Activated T-helper 1 cell treated with anti-CD3 and anti-CD28 coated beads, Interleukin-12 subunit alpha, Interleukin-12 subunit beta, Interleukin-2, Interleukin-4 antibody, amounts not matched to agents 30 ng/mL and 10 ng/mL and 1 ng/mL, durations not matched to agents 14 hours and 24 hours and 36 hours (primary cell): ENCODE measurements at regions of chr10 and their contacts with region 1.

Region 1: DNA sequence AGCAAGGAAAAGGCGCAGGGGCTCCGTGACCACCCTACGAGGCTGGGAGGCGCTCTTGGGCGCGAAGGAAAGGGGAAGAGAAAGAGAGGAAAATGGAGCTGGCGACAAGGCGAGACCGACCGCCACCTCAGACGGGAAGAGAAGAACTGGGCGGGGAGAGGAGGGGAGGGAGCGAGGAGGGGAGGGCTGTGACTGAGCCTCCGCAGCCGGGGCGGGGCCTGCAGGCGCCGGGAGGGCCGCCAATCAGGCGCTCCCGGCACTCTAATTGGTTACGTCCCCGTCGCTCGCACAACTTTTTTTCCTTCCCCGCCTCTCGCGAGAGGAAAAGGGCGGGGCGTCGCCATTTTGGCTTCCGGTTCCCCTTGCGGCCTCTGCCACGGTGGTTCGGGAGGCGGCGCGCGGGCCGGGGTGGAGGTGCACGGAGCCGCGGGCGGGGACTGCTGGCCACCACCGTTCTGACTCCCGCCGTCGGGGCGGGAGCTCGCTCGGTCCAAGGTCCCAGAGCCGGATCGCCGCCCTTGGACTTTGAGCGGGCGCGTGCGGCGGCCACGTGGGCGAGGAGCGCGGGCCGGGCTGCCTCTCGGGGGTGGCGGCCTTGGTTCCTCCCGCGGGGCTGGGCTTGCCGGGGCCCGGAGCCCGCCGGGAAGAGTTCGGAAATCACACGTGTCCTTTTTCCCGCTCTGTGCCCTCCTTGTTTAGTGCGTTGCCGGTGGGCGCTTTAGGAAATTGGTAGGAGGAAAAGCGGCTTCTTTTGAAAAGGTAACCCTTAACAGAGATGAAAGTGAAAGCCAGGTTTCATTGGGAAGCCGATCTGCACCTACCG is at the start of gene GDI2:
- DNase-seq: peak; percentile 97
- H3K4me3 Mint-ChIP-seq: peak within 1 kb of the TSS; percentile 95
- H3K27ac Mint-ChIP-seq: peak within 1 kb of the TSS; percentile 91
- H3K4me1 Mint-ChIP-seq: peaks cover 69% of the 10 kb centered on the region
- H3K27me3 Mint-ChIP-seq: no peaks in the 10 kb centered on the region
- total RNA-seq, gene GDI2: 288 and 290 TPM in 2 replicates

Region 2: DNA sequence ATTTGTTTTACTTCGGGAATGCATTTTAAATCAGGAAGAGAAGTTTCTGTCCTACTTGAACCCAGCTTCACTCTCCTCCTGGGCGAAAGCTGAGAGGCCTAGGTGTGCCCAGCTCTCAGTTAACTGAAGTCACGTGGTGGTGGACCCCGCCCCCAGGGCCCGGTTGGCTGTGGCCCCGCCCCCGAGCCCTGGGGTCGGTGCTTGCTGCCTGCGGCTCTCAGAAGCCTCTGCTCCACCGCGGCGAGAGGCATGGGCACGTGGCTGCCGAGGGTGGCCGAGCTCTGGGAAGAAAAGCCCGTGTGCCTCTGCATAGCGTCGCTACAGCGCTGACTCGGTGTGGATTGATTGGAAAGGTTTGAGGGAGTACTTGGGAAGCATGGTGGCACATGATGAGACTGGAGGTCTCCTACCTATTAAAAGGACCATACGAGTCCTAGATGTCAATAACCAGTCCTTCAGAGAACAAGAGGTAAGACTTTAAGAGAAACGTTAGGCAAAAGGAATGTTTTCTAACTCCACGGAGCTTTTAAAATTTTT is 367.0 kb before region 1 on chr10:
- intact Hi-C with region 1: loop called (anchors 10 kb)
- DNase-seq: peak; percentile 75
- H3K4me3 Mint-ChIP-seq: peak overlapping the region; percentile 89
- H3K27ac Mint-ChIP-seq: peak overlapping the region; percentile 79
- H3K4me1 Mint-ChIP-seq: peaks cover 62% of the 10 kb centered on the region
- H3K27me3 Mint-ChIP-seq: no peaks in the 10 kb centered on the region

Region 3: DNA sequence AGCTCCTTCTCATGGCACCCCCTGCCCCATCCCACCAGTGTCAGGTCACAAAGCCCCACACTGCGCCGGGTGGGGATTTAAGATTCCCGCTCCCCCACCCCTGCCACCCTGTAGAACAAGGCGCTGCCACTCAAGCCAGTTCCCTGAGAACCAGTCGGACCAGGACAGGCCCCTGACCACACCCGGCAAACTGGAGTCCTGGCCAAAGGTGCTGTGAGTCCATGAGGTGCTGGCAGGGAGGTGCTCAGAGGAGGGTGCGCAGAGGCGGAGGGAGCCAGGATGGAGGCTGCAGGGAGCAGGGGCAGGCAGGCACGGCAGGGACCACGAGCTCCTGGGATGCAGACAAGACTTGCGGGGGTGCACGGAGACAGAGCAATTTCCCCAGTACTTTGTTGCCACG is 19.4 kb after region 1 on chr10:
- intact Hi-C with region 1: no loop called
- DNase-seq: no peak
- H3K4me3 Mint-ChIP-seq: no peak overlapping the region
- H3K27ac Mint-ChIP-seq: no peak overlapping the region
- H3K4me1 Mint-ChIP-seq: no peaks in the 10 kb centered on the region
- H3K27me3 Mint-ChIP-seq: peaks cover 2% of the 10 kb centered on the region

Region 4: DNA sequence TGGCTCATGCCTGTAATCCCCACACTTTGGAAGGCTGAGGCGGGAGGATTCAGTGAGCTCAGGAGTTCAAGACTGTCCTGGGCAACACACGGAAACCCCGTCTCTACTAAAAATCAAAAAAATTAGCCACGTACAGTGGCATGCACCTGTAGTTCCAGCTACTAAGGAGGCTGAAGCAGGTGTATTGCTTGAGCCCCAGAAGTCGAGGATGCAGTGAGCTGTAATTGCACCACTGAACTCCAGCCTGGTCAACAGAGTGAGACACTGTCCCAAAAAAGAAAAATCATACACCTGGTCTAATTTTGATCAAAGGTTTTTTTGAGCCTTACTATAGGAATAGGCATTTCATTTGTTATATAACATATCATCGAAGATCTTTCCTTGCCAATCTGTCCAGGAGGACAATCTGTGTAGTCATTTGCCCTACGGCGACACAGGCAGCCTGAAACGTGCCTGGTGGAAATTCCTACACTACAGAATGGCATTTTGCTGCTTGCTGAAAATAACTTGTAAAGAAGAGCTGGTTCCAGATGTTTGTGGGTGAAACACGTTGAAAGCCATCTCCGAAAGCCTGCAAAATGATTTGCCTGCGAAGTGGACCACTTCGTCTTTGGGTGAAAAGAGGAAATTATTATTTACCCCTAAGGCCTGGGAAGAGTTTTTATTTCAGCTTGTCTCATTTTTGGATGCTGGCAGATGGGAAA is 31.0 kb after region 1 on chr10:
- intact Hi-C with region 1: loop called (anchors 2 kb)
- DNase-seq: no peak
- H3K4me3 Mint-ChIP-seq: no peak overlapping the region
- H3K27ac Mint-ChIP-seq: no peak overlapping the region
- H3K4me1 Mint-ChIP-seq: peaks cover 19% of the 10 kb centered on the region
- H3K27me3 Mint-ChIP-seq: peaks cover 1% of the 10 kb centered on the region

Region 5: GRCh38 chr10:5862360-5862961 is 49.0 kb after region 1 on chr10:
- intact Hi-C with region 1: no loop called
- DNase-seq: no peak
- H3K4me3 Mint-ChIP-seq: no peak overlapping the region
- H3K27ac Mint-ChIP-seq: no peak overlapping the region
- H3K4me1 Mint-ChIP-seq: peaks cover 10% of the 10 kb centered on the region
- H3K27me3 Mint-ChIP-seq: no peaks in the 10 kb centered on the region

Region 6: DNA sequence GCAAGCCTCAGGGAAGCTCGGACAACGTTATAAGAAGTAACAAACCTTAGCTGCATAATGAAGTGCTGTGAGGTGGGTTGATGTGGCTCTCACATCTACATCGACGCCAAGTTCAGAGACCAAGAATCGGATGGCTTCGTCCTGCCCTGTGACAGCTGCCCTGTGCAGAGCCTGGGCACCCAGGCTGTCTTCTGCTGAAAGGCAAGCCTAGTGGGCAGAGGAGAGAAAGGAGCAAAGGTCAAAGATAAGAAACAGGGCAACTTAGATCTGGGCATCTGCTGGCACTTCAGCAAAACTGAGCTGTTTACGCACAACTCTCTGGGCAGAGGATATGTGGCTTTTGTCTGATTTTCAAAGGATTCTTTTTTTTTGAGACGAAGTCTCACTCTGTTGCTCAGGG is 69.5 kb after region 1 on chr10:
- intact Hi-C with region 1: no loop called
- DNase-seq: no peak
- H3K4me3 Mint-ChIP-seq: no peak overlapping the region
- H3K27ac Mint-ChIP-seq: no peak overlapping the region
- H3K4me1 Mint-ChIP-seq: peaks cover 10% of the 10 kb centered on the region
- H3K27me3 Mint-ChIP-seq: no peaks in the 10 kb centered on the region

Region 7: GRCh38 chr10:5977471-5978229 is 164.2 kb after region 1 on chr10 and contains the start of gene IL15RA:
- intact Hi-C with region 1: loop called (anchors 1 kb)
- DNase-seq: peak; percentile 88
- H3K4me3 Mint-ChIP-seq: peak within 1 kb of the TSS; percentile 93
- H3K27ac Mint-ChIP-seq: peak within 1 kb of the TSS; percentile 90
- H3K4me1 Mint-ChIP-seq: peaks cover 31% of the 10 kb centered on the region
- H3K27me3 Mint-ChIP-seq: peaks cover 3% of the 10 kb centered on the region
- total RNA-seq, gene IL15RA: 23.4 and 24.4 TPM in 2 replicates

Region 8: DNA sequence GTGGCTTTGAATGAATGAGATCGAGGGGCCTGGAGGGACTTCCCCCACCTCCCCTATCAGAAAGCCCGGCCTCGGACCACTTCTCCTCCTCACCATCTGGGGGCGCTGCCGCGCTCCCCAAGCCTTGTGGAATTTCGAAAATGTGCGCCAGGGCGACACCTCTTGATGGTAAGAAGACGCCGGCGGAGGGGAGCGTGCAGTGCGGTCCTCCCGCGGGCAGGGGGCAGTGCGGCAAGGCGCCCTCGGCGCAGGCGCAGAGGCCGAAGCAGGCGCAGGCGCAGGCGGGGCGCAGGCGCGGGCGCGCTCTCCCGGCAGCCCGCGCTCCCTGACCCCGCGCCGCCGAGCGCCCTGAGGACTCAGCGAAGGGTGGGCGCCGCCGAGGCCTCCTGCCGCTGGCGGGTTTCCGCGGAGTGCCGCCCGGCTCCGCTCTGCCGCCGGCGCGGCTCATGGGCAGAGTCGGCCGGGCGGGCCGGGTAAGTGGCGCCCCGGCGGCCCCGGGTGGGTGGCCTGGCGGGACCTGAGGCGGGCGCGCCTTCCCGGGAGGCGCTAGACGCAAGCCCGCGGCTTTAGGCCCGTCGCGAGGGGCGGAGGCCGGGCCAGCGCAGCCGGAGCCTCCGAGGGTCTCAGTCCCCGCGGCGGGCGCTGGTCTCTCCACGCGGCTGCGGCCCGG is 275.4 kb after region 1 on chr10 and contains the start of gene RBM17:
- intact Hi-C with region 1: loop called (anchors 10 kb)
- DNase-seq: peak; percentile 98
- H3K4me3 Mint-ChIP-seq: peak within 1 kb of the TSS; percentile 95
- H3K27ac Mint-ChIP-seq: peak within 1 kb of the TSS; percentile 88
- H3K4me1 Mint-ChIP-seq: peaks cover 63% of the 10 kb centered on the region
- H3K27me3 Mint-ChIP-seq: no peaks in the 10 kb centered on the region
- total RNA-seq, gene RBM17: 265 and 283 TPM in 2 replicates